ENCODE measurements at regions of chr17 and their contacts with region 1.

Region 1: DNA sequence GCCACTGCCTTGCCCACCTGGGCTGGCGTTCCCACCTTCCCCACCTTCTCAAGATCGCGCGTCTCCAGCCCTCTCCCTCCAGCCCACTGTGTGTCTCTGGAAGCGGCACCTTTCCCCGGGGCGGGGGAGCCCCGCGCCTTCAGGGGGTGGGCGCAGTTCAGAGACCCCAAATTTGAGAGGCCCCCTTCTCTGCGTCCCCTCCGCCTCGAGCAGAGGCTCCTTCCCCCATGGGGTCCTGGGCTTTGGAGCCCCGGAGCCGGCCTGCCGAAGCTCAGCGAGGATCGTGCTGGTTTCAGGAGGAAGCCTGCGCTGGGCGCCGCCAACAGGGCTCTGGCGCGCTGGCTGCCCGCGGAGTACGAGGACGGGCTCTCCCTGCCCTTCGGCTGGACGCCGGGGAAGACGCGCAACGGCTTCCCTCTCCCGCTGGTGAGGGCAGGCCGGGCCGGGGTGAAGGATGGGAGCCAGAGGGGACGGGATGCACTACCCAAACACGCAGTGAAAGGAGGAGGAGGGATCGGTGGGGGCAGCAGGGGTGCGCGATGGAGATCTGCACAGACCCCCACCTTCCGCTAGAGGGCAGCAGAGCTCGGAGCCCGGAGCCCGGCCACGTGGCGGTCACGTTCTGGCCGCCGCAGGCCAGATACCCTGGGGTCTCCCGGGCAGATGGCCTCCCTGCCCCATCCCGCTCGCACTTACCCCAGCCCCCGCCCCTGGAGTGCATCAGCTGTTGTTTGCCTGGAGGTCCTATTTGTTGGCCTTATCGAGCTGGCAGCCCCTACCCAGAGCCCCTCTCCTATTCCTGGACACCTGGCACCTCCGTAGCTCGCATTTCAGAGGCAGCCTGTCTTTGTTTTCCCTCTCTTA is 11.1 kb downstream of the LPO start:
- DNase-seq: peak; percentile 99
- H3K4me3 ChIP-seq: peak overlapping the region; percentile 47 to 71
- H3K27ac ChIP-seq: no peak overlapping the region
- H3K4me1 ChIP-seq: peaks cover 0 to 8% of the 10 kb centered on the region in 2 experiments; a peak in 1 of 4 replicates
- H3K27me3 ChIP-seq: peaks cover 79% of the 10 kb centered on the region
- CTCF ChIP-seq: peak; percentile 99
- EP300 ChIP-seq: no peak
- RAD21 ChIP-seq: peak; percentile 66

Region 2: GRCh38 chr17:58136669-58137283 is 112.7 kb before region 1 on chr17:
- CTCF ChIA-PET with region 1: interaction called, 11 read pairs
- POLR2A ChIA-PET with region 1: no interaction called
- DNase-seq: peak; percentile 63
- H3K4me3 ChIP-seq: no peak overlapping the region
- H3K27ac ChIP-seq: no peak overlapping the region
- H3K4me1 ChIP-seq: no peaks in the 10 kb centered on the region
- H3K27me3 ChIP-seq: peaks cover 45% of the 10 kb centered on the region; the same call in 1 of the 2 replicates
- CTCF ChIP-seq: peak; percentile 56
- EP300 ChIP-seq: no peak
- RAD21 ChIP-seq: peak; percentile 63

Region 3: DNA sequence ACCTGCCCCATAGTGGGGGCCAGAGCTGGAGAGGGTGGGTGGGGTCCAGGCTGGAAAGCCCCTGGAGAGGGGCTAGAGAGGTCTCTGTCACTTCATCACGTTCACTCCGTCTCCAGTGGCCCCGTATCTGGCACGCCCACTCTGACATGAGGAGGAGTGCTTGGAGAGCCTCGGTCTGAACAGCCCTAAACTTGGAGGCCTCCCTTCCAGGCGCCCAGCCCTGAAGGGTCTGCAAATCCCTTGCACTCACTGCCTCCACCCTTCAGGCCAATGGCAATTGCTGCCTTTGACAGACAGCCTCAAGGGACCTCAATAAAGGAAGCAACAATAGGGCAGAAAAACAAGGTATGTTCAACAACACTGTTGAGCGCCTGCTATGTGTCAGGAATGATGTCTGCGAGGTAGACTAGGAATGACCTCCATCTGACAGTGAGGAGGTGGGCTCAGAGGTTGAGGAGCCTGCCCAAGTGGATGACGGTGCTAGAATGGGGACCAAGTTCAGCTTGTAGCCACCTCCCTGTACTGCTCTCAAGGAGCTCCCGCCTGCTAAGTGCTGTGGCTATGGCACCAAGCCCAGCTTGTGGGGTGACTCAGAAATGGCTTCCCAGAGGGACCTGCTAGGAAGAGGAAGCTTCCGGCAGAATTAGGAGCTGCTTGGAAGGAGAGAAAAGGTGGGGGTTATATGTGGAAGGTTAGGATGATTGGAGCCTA is 59.9 kb before region 1 on chr17:
- CTCF ChIA-PET with region 1: no interaction called
- POLR2A ChIA-PET with region 1: no interaction called
- DNase-seq: peak; percentile 30
- H3K4me3 ChIP-seq: no peak overlapping the region
- H3K27ac ChIP-seq: no peak overlapping the region
- H3K4me1 ChIP-seq: no peaks in the 10 kb centered on the region; a peak in 1 of 4 replicates
- H3K27me3 ChIP-seq: peaks cover 25% of the 10 kb centered on the region; the same call in 1 of the 2 replicates
- CTCF ChIP-seq: no peak
- EP300 ChIP-seq: no peak
- RAD21 ChIP-seq: no peak

Region 4: GRCh38 chr17:58219001-58219788 is 30.3 kb before region 1 on chr17 and contains the start of gene MKS1:
- CTCF ChIA-PET with region 1: interaction called, 24 read pairs
- POLR2A ChIA-PET with region 1: no interaction called
- DNase-seq: peak; percentile 100
- H3K4me3 ChIP-seq: peak within 1 kb of the TSS; percentile 79 to 87
- H3K27ac ChIP-seq: peak within 1 kb of the TSS; percentile 48 to 66
- H3K4me1 ChIP-seq: peaks cover 2 to 10% of the 10 kb centered on the region in 2 experiments; a peak in 1 of 4 replicates
- H3K27me3 ChIP-seq: no peaks in the 10 kb centered on the region
- CTCF ChIP-seq: peak; percentile 61
- EP300 ChIP-seq: no peak
- RAD21 ChIP-seq: no peak
- polyA plus RNA-seq, gene MKS1: 28.5 and 32.8 TPM in 2 replicates

Region 5: DNA sequence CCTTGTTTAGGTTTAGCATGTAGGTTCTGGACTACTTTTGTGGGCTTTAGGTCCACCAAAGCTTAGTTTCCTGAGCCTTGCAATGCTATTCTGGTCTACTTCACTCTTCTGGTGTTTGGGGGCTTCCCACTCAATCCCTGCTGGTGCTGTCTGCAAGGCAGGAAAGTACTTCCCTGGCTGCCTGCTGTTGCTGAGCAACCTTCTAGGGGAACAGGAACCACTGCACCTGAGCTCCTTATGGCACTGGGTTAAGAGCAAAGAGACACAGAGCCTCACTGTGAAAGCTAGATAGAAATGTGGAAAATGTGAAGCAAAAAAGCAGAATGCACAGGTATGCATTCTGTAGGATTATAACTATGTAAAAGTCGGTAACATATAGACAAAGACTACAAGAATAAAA is 14.3 kb after region 1 on chr17:
- CTCF ChIA-PET with region 1: interaction called, 19 read pairs
- POLR2A ChIA-PET with region 1: no interaction called
- DNase-seq: no peak
- H3K4me3 ChIP-seq: no peak overlapping the region
- H3K27ac ChIP-seq: no peak overlapping the region
- H3K4me1 ChIP-seq: no peaks in the 10 kb centered on the region
- H3K27me3 ChIP-seq: peaks cover 50% of the 10 kb centered on the region
- CTCF ChIP-seq: no peak
- EP300 ChIP-seq: no peak
- RAD21 ChIP-seq: no peak

Region 6: DNA sequence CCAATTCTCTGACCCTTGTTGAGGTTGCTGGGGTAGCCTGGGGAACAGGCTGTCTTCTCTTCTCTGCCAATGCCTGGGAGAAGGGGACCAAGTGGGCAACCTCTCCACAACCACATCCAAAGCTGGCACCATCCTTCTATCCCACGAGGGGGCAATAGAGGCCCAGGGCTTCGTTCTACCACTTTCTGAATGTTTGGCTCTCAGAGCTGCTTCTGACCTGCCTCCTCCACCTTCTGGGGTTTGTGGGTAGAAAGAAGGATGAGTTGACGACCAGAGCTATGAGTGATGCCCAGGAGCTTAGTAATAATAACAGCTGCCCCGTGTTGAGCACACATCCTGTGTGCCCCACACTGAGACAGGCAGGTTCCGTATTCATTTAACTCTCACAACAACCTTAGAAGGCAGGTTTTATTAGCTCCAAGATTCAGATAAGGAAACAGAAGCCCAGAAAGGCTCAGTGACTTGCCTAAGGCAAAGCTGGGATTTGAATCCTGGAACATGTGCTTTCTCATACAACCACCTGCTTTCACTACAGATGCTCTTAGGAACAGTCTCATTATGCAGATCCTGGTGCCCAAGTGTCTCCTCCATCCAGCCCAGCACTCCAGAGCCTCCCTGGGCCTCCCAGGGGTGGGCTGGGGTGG is 68.0 kb after region 1 on chr17:
- CTCF ChIA-PET with region 1: interaction called, 13 read pairs
- POLR2A ChIA-PET with region 1: no interaction called
- DNase-seq: peak; percentile 81
- H3K4me3 ChIP-seq: no peak overlapping the region
- H3K27ac ChIP-seq: no peak overlapping the region
- H3K4me1 ChIP-seq: no peaks in the 10 kb centered on the region
- H3K27me3 ChIP-seq: no peaks in the 10 kb centered on the region
- CTCF ChIP-seq: peak; percentile 74
- EP300 ChIP-seq: no peak
- RAD21 ChIP-seq: peak; percentile 83

Region 7: DNA sequence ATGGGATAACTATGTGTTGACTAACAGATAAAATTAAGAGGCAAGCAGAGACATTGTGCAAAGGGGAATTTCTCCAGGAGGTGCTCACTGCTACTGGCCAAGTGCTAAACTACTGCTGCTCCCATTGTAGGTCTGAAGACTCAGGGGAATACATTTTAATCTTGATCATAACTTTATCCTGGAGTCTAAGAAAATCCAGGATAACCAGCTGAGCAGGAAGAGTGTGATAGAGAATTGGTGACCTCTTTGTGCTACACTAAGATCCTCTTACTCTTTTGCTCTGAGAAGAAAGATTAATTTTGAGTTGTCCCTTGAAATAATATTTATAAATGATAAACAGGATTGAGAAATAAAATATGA is 161.9 kb after region 1 on chr17:
- CTCF ChIA-PET with region 1: interaction called, 51 read pairs
- POLR2A ChIA-PET with region 1: no interaction called
- DNase-seq: no peak
- H3K4me3 ChIP-seq: no peak overlapping the region
- H3K27ac ChIP-seq: no peak overlapping the region
- H3K4me1 ChIP-seq: peaks cover 0 to 2% of the 10 kb centered on the region in 2 experiments; a peak in 1 of 4 replicates
- H3K27me3 ChIP-seq: peaks cover 6% of the 10 kb centered on the region
- CTCF ChIP-seq: no peak
- EP300 ChIP-seq: no peak
- RAD21 ChIP-seq: no peak

Measured in SK-N-SH (cell line).